Heart right ventricle (tissue), 16 donors: ENCODE measurements at regions of chr4 and their contacts with region 1.

Region 1: DNA sequence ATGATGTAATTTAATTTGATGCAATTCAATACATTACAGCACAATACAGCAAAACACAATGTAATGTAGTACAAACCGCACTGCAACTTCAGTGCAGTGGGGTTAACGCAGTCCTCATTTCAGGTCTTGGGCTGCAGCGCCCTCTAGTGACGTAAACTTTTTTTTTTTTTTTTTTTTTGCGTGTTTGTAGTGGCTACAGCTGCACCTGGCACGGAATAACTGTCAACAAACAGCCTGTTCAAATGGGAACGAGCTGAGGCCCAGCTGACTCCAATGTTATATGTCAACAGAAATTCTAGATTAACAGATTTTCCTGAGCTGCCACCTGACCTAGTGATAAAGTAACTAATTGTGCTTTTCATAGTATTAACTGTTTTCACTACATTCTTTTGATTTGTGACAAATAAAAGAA is 33.5 kb upstream of the RASSF6 start:
- DNase-seq: no peak
- ATAC-seq: peak in 5 of 8 donors; percentile 53 to 82 (median 66)
- H3K4me3 ChIP-seq: no peak overlapping the region
- H3K27ac ChIP-seq: no peak overlapping the region
- H3K4me1 ChIP-seq: peaks cover 0 to 4% (median 0%) of the 10 kb centered on the region in 9 donors
- H3K27me3 ChIP-seq: peaks cover 0 to 13% (median 0%) of the 10 kb centered on the region in 7 donors
- CTCF ChIP-seq: peak; percentile 42 to 72 (median 59)

Region 2: DNA sequence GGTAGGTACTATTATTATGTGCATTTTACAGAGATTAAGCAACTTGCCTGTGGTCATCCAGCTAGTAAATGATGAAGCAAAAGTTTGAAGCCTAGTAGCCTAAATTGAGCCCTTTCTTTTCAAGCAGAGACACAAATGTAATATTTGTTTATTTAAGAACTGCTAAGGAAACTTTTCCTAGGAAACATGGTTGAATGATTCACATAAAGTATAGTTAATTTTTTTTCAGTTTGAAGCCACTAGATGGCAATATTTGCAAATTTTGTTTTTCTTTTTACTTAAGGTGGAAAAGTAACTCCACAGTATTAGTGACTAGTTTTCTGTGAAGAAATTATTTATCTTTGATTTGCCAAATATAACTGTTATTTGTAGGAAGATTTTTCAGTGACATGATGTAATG is 342.3 kb before region 1 on chr4:
- intact Hi-C with region 1: loop called in 7 of 10 experiments (anchors 5 to 10 kb)
- DNase-seq: no peak
- ATAC-seq: no peak
- H3K4me3 ChIP-seq: no peak overlapping the region
- H3K27ac ChIP-seq: no peak overlapping the region
- H3K4me1 ChIP-seq: peaks cover 0 to 3% (median 0%) of the 10 kb centered on the region in 9 donors
- H3K27me3 ChIP-seq: no peaks in the 10 kb centered on the region
- CTCF ChIP-seq: peak in 7 of 9 donors; percentile 16 to 59 (median 46)

Region 3: DNA sequence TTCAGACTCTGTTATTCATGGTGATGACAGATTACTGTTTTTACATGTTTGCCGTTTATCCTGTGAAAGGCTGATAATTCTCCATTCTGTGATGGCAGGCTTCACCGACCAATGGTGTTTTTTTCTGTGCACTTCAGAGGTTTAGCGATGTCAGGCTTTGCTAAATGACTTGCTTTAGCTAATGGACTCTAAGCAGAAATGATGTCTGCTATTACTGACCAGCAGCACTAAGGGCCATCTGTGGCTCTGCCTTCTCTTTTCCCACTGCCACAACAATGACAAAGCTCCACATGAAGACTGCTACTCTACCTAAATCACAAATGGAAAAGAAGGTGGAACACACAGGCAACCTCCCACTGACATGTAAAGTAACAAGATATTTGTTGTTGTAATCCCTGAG is 318.0 kb before region 1 on chr4:
- intact Hi-C with region 1: loop called in 3 of 10 experiments (anchors 10 kb)
- DNase-seq: no peak
- ATAC-seq: no peak
- H3K4me3 ChIP-seq: no peak overlapping the region
- H3K27ac ChIP-seq: no peak overlapping the region
- H3K4me1 ChIP-seq: no peaks in the 10 kb centered on the region
- H3K27me3 ChIP-seq: peaks cover 0 to 4% (median 0%) of the 10 kb centered on the region in 7 donors
- CTCF ChIP-seq: no peak

Region 4: DNA sequence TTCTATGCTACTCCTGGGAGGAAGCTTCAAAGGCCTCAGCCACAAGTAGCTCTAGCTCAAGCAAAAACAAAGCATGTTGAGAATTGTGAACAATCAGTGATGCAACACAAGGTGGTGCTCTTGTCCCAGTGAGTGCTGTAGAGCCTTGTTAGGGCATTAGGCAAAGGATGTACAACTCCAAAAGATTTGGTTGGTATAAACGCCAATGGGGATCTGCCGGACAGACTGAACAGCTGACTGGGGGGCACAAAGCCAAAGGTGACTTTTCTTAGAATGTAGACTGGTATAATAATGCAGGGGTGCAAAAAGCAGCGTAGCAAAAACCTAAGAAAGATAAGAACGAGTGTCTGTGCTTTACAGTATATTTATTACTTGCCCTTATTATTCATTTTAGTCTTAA is 312.2 kb before region 1 on chr4:
- intact Hi-C with region 1: loop called in 3 of 10 experiments (anchors 10 kb)
- DNase-seq: no peak
- ATAC-seq: no peak
- H3K4me3 ChIP-seq: no peak overlapping the region
- H3K27ac ChIP-seq: no peak overlapping the region
- H3K4me1 ChIP-seq: no peaks in the 10 kb centered on the region
- H3K27me3 ChIP-seq: peaks cover 0 to 9% (median 0%) of the 10 kb centered on the region in 7 donors
- CTCF ChIP-seq: peak in 8 of 9 donors; percentile 12 to 49 (median 38)

Region 5: DNA sequence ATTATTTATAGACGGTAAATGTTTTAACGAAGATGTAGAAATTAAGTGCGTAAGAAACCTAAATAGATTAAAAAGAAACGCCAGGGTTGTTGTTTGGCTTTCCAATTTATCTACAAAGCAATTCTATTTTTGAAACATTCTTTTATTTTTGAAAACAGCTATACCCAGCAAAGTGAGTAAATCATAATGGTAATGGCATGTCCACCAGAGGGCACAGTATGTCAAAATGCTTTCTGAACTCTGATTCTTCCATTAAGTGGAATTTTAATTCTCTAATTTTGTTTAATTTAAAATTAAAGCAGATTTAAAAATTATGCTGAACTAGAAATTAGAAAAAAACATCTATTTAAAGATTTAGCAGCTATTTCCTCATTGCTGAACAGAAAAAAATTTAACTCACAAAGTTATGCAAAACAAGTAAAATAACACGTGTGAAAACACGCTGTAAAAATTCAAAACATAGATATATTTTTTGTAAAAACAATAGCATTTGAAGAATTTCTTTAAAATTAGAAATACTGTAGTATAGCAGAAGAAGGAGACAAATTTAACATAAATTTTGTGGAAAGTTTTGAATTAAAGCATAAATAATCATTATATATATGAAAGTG is 60.0 kb before region 1 on chr4:
- intact Hi-C with region 1: loop called in 1 of 10 experiments (anchors 10 kb)
- DNase-seq: no peak
- ATAC-seq: no peak
- H3K4me3 ChIP-seq: no peak overlapping the region
- H3K27ac ChIP-seq: no peak overlapping the region
- H3K4me1 ChIP-seq: no peaks in the 10 kb centered on the region
- H3K27me3 ChIP-seq: no peaks in the 10 kb centered on the region
- CTCF ChIP-seq: peak in 7 of 9 donors; percentile 39 to 61 (median 52)